CD14-positive monocyte (primary cell): ENCODE measurements at regions of chr5 and their contacts with region 1.

Region 1: DNA sequence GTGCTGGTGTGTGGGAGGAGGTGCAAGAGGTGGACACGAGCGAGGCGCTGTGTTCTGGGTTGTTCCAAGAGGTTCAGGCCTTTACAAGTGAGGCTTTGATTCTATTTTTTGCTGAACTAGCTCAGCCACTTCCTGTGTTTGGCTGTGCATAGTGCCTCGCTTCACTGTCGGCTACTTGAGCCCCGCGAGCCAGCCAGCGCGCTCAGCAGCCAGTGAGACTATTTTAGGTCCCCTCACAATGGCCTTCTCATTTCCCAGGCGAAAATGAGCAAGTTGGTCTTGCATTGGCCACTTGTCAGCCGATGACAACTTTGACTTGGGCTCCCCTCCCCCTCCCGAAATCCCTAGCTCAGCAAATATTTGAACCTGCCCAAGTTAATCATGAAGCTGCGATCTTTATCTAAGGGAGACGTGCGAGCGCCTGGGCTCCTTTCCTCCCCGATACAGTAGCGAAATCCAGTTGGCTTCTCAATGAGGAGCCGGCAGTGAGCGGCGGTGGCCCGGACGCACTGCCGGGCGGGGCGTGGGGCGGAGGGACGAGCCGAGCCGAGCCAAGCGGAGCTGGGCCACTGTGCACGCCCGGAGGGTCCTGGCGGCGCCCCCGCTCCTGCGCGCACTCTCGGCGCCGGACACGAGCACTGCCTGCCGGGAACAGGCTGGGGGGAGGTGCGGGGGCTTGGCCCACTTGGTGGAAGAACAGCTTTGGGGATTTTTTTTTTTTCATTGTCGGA is 72.6 kb downstream of the PIK3R1 start:
- DNase-seq: peak; percentile 35 to 50 (median 41)
- H3K4me3 ChIP-seq: peak overlapping the region; percentile 46 to 79 (median 70)
- H3K4me3 Mint-ChIP-seq: peak overlapping the region; percentile 87 to 92
- H3K27ac ChIP-seq: peak overlapping the region; percentile 48 to 80
- H3K27ac Mint-ChIP-seq: peak overlapping the region; percentile 60 to 90 (median 81)
- H3K4me1 ChIP-seq: peaks cover 18 to 24% of the 10 kb centered on the region in 2 donors
- H3K4me1 Mint-ChIP-seq: peaks cover 30% of the 10 kb centered on the region
- H3K27me3 ChIP-seq: no peaks in the 10 kb centered on the region
- H3K27me3 Mint-ChIP-seq: no peaks in the 10 kb centered on the region
- CTCF ChIP-seq: no peak

Region 2: GRCh38 chr5:68343421-68343826 is 55.3 kb after region 1 on chr5:
- intact Hi-C with region 1: loop called in 1 of 2 experiments (anchors 10 kb)
- DNase-seq: peak in 2 of 3 donors; percentile 18 to 60
- H3K4me3 ChIP-seq: no peak overlapping the region
- H3K4me3 Mint-ChIP-seq: no peak overlapping the region
- H3K27ac ChIP-seq: no peak overlapping the region
- H3K27ac Mint-ChIP-seq: no peak overlapping the region
- H3K4me1 ChIP-seq: peaks cover 24 to 26% of the 10 kb centered on the region in 2 donors
- H3K4me1 Mint-ChIP-seq: peaks cover 24% of the 10 kb centered on the region
- H3K27me3 ChIP-seq: no peaks in the 10 kb centered on the region
- H3K27me3 Mint-ChIP-seq: peaks cover 0 to 2% (median 0%) of the 10 kb centered on the region in 3 donors
- CTCF ChIP-seq: no peak

Region 3: DNA sequence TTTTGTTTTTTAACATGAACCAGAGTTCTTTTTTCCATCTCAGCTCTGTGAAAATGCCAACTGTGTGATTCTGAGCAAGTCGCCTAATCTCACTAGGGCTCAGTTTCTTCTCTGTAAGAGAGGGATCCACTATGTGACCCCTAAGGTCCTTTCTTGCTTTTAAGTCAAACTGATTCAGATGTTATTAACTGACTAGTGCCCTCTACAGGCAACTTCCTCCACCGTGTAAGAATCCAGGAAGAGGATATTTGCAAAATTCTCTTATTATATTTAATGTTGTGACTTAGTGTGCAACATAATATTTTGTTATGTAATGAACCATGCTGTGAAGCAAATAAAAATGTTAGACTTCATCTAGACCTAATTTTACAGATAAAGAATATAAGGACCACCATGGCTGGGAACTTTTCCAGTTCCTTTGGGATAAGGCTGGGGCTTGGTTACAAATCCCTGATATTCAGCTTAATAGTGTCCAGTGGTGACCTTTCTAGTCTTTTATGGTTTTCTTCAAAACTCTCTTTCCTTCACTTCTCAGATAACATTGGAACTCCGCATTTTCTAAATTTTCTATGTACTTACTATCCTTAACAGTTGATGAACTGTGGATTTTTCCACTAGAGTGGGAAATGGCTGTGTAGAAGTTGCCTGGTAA is 172.1 kb after region 1 on chr5:
- intact Hi-C with region 1: loop called (anchors 2 kb)
- DNase-seq: peak; percentile 58 to 77 (median 75)
- H3K4me3 ChIP-seq: no peak overlapping the region
- H3K4me3 Mint-ChIP-seq: no peak overlapping the region
- H3K27ac ChIP-seq: no peak overlapping the region
- H3K27ac Mint-ChIP-seq: no peak overlapping the region
- H3K4me1 ChIP-seq: peaks cover 0 to 6% of the 10 kb centered on the region in 2 donors
- H3K4me1 Mint-ChIP-seq: no peaks in the 10 kb centered on the region
- H3K27me3 ChIP-seq: no peaks in the 10 kb centered on the region
- H3K27me3 Mint-ChIP-seq: peaks cover 0 to 2% (median 2%) of the 10 kb centered on the region in 3 donors
- CTCF ChIP-seq: peak; percentile 76

Region 4: DNA sequence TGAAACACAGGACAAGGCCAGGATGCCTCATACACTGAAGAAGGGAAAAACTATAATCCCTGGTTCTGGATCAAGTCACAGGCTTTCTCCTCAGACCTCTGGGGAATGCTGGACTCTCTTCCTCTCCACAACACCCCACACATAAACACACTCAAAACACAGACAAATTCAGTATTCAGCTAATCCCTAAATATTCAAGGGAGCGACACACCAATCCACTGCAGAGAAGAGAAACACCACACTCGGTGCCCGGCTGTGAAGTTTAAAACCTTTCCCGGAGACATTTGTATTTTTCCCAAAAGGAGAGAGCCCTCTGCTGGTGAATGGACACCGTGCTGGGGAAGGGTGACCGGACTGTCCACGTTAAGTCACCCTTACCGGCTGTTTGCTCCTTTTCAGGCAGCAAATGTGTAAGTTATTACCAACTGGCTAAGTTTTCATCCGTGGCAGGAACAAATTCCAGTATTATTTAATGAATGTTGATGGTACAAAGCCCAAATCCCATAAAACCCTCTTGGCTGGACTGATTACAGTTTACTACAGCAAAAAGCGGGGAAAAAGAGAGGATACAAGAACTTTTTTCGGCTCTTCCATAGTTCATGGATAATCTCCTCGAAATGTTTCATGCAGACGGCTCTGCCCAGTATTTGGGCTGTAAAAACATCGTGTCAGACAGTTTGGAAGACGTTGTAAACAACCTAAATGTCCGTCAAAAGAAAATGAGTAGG is 674.8 kb after region 1 on chr5:
- intact Hi-C with region 1: loop called in 1 of 2 experiments (anchors 5 kb)
- DNase-seq: no peak
- H3K4me3 ChIP-seq: no peak overlapping the region
- H3K4me3 Mint-ChIP-seq: no peak overlapping the region
- H3K27ac ChIP-seq: no peak overlapping the region
- H3K27ac Mint-ChIP-seq: no peak overlapping the region
- H3K4me1 ChIP-seq: no peaks in the 10 kb centered on the region
- H3K4me1 Mint-ChIP-seq: peaks cover 3% of the 10 kb centered on the region
- H3K27me3 ChIP-seq: no peaks in the 10 kb centered on the region
- H3K27me3 Mint-ChIP-seq: peaks cover 0 to 1% (median 0%) of the 10 kb centered on the region in 3 donors
- CTCF ChIP-seq: peak; percentile 62